Right cardiac atrium (tissue), 5 donors: ENCODE measurements at regions of chr7 and their contacts with region 1.

Region 1: GRCh38 chr7:129652914-129653313 is 41.4 kb downstream of the NRF1 start:
- DNase-seq: no peak
- ATAC-seq: no peak
- H3K4me3 ChIP-seq: no peak overlapping the region
- H3K27ac ChIP-seq: no peak overlapping the region
- H3K4me1 ChIP-seq: no peaks in the 10 kb centered on the region
- H3K27me3 ChIP-seq: no peaks in the 10 kb centered on the region

Region 2: DNA sequence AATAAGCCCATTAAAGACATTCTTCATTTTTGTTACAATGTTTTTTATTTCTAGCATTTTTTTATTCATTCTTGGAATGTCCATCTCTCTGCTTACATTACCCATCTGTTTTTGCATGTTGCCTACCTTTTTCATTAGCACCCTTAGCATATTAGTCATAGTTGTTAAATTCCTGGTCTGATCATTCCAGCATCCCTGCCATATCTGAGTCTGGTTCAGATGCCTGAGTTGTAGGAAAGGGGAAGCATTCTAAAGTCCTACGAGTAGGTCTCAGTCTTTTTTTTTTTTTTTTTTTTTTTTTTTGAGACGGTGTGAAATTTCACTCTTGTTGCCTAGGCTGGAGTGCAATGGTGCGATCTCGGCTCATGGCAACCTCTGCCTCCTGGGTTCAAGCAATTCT is 61.0 kb before region 1 on chr7:
- intact Hi-C with region 1: loop called in 1 of 4 experiments (anchors 10 kb)
- DNase-seq: no peak
- ATAC-seq: no peak
- H3K4me3 ChIP-seq: no peak overlapping the region
- H3K27ac ChIP-seq: no peak overlapping the region
- H3K4me1 ChIP-seq: no peaks in the 10 kb centered on the region
- H3K27me3 ChIP-seq: no peaks in the 10 kb centered on the region

Region 3: DNA sequence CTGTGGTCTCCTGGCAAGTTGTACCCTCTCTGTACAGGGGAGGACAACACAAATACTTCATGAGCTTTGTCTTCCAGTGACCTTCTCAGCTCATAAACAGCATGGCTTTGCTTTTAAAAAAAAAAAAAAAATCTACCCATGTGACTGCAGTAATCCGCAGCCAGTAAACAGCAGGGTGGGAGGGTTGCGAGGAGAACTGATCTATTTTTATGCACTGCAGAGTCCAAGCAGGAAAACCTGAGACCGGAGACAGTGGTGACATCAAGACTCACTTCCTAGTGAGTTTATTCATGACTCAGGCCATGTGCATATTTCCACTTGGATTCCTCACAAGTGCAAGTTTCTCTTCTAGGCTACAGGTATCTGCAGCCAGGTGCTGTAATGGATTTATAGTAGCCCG is 86.5 kb after region 1 on chr7:
- intact Hi-C with region 1: no loop called
- DNase-seq: no peak
- ATAC-seq: peak; percentile 77 to 87
- H3K4me3 ChIP-seq: no peak overlapping the region
- H3K27ac ChIP-seq: peak overlapping the region; percentile 78
- H3K4me1 ChIP-seq: peaks cover 13% of the 10 kb centered on the region
- H3K27me3 ChIP-seq: no peaks in the 10 kb centered on the region

Region 4: DNA sequence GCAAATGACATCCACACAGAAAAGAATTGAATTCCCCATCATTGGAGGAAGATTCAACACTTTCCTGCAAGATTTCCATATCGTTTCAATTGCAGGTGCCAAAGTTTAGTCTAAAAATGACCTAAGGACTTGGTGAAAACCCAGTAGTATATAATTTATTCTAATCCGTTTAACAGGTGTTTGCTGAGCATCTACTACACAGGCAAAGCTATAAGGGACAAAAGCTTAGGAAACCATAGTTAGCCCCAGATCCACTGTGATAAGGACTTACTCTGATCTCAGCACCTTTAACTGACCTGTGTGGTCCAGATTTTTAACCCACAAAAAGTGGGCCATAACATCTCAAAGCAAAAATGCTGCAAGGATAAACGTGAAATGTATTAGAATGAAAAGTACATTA is 280.7 kb after region 1 on chr7:
- intact Hi-C with region 1: no loop called
- DNase-seq: no peak
- ATAC-seq: no peak
- H3K4me3 ChIP-seq: no peak overlapping the region
- H3K27ac ChIP-seq: no peak overlapping the region
- H3K4me1 ChIP-seq: peaks cover 2% of the 10 kb centered on the region
- H3K27me3 ChIP-seq: no peaks in the 10 kb centered on the region